Spleen (tissue), 13 donors: ENCODE measurements at regions of chr3 and their contacts with region 1.

Region 1: DNA sequence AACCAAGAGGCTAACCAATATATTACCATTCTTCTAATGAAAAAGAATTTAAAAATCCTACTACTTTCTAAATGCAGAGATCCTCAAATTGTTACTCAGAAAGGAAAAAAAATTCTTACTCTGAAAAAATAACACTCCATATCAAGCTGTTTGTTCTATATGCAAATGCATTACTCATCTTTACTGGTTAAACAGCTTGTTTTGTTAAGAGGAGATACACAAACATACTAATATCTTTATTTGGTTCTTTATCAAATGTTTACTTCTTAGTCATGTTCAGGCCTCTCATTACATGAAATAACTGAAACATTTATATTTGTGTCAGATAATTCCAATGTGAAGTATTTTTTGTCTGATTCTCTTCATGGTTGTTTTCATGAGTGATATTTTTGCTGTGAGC is 146.8 kb downstream of the PCCB start:
- DNase-seq: no peak
- H3K4me3 ChIP-seq: no peak overlapping the region
- H3K27ac ChIP-seq: no peak overlapping the region
- H3K4me1 ChIP-seq: peaks cover 0 to 3% (median 0%) of the 10 kb centered on the region in 6 donors
- H3K27me3 ChIP-seq: no peaks in the 10 kb centered on the region
- CTCF ChIP-seq: no peak
- POLR2A ChIP-seq: no peak

Region 2: DNA sequence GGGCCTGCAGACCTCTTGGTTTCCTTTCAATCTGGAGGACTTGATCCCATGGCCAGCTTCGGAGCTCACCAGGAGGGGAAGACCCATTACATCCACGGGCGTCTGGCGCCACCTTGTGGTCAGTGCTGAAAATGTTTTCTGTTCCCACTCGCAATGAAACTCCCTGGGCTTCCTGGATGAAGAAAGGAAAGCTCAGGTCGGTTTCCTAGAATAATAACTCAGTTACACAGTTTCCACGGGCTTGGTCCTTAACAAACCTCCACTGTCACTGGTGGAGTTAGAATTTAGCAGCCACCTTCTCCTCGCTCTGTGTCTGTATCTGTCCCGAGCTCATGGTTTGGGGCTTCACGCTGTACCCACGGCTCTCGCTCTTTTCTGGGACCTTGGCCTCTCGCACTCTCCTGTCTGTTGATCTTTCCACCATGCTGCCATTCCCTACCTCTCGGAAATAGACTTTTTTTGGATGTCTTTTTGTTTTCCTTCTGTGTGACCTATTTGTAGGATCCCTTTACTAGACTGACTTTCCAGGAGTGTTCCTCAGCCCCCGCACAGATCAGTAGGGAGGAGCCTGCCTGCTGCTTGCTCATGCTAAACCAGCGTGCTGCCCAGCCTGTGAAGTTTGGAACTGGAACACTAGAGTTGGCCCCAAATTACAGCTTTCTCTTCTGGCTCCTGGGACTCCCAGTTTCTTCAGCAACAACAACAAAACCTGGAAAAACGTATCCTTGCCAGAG is 617.2 kb after region 1 on chr3:
- intact Hi-C with region 1: loop called (anchors 10 kb)
- DNase-seq: peak; percentile 94
- H3K4me3 ChIP-seq: peak overlapping the region; percentile 21 to 66 (median 39)
- H3K27ac ChIP-seq: peak overlapping the region in 7 of 8 donors; percentile 15 to 69 (median 51)
- H3K4me1 ChIP-seq: peaks cover 2 to 14% (median 11%) of the 10 kb centered on the region in 6 donors
- H3K27me3 ChIP-seq: no peaks in the 10 kb centered on the region
- CTCF ChIP-seq: peak; percentile 82 to 95 (median 90)
- POLR2A ChIP-seq: no peak